Activated T-helper 2 cell treated with anti-CD3 and anti-CD28 coated beads, Interferon-gamma antibody, Interleukin-2, Interleukin-4, amounts not matched to agents 10 μg/mL and 5 μg/mL and 100 μg/mL, durations not matched to agents 14 hours and 24 hours and 36 hours (primary cell): ENCODE measurements at regions of chr10 and their contacts with region 1.

Region 1: GRCh38 chr10:103139803-103140202 is 53.3 kb downstream of the NT5C2 start:
- DNase-seq: no peak
- H3K4me3 Mint-ChIP-seq: no peak overlapping the region
- H3K27ac Mint-ChIP-seq: no peak overlapping the region
- H3K4me1 Mint-ChIP-seq: peaks cover 12% of the 10 kb centered on the region
- H3K27me3 Mint-ChIP-seq: no peaks in the 10 kb centered on the region

Region 2: DNA sequence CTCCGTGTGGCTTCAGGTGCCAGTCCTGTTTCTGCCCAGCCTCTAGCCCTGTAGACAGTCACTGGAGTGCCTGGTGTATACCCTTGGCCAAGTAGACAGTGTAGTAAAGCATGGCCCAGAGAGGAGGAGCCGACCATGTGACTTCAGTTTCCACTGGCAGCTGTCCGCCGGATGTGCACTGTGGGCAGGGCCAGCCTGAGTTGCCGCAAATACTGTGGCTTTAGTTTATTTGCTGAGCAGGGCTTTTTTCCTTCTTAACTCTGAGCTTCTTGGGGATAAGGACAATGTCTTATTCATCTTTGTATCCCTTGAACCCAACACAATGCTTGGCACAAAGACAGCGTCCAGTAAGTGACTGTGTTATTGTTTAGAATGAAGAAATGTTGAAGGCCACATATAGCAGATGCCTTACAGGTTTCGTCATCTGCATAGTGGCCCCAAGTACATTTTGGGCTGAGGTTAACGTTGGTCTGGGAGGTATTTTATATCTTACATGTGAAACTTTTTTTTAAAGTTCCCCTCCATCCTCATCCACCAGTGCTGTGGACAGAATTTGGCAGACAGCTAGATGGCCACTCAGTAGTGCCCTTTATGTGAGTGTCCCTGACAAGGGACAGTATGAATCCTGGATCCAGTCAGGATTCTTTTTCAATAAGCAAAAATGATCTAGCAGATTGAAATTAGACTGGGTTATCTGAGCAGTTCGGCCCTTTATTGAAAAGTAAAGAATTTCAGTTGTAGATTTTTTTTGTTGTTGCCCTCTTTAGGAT is 343.2 kb before region 1 on chr10:
- intact Hi-C with region 1: no loop called
- DNase-seq: peak; percentile 59
- H3K4me3 Mint-ChIP-seq: peak overlapping the region; percentile 8
- H3K27ac Mint-ChIP-seq: peak overlapping the region; percentile 54
- H3K4me1 Mint-ChIP-seq: peaks cover 26% of the 10 kb centered on the region
- H3K27me3 Mint-ChIP-seq: no peaks in the 10 kb centered on the region

Region 3: GRCh38 chr10:102853944-102854694 is 285.7 kb before region 1 on chr10 and contains the start of gene BORCS7:
- intact Hi-C with region 1: no loop called
- DNase-seq: peak; percentile 86
- H3K4me3 Mint-ChIP-seq: peak within 1 kb of the TSS; percentile 93
- H3K27ac Mint-ChIP-seq: peak within 1 kb of the TSS; percentile 96
- H3K4me1 Mint-ChIP-seq: peaks cover 16% of the 10 kb centered on the region
- H3K27me3 Mint-ChIP-seq: no peaks in the 10 kb centered on the region
- total RNA-seq, gene BORCS7: 10.4 and 10.7 TPM in 2 replicates

Region 4: DNA sequence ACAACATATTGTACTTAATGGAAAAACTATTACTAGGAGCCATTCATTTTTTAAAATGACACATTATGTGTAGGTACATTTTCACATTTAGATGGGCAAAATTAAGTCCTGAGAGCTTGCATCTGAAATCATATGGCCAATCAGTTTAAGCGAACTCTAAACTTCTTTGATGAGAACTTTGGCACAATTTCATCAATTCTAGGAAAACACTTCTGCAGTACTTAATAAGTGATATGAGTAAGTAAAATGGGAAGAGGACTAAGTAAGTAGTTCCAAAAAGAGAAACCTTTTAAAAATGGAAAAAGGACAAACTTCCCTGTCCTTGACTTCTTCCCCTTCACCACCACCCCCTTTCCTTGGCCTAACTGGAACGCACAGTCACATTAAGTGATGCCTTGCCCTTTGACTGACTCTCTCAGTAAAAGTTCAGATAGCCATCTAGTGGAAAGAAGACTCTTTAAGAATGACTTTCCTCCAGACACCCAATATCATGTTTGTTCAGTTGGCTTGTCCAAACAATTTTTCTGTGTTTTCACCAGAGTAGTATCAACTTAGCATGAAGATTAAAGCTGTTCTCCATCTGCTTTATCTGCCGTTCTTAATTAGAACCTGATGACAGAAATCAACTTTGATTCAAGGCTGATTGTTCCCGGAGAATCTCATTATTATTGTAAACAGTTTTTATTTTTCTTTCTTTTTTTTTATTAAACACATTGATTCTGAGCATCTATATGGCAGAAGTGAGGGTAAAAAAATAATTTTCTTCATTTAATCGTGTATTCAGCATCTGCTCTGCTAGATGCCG is 176.7 kb before region 1 on chr10:
- intact Hi-C with region 1: no loop called
- DNase-seq: no peak
- H3K4me3 Mint-ChIP-seq: no peak overlapping the region
- H3K27ac Mint-ChIP-seq: no peak overlapping the region
- H3K4me1 Mint-ChIP-seq: no peaks in the 10 kb centered on the region
- H3K27me3 Mint-ChIP-seq: no peaks in the 10 kb centered on the region

Region 5: DNA sequence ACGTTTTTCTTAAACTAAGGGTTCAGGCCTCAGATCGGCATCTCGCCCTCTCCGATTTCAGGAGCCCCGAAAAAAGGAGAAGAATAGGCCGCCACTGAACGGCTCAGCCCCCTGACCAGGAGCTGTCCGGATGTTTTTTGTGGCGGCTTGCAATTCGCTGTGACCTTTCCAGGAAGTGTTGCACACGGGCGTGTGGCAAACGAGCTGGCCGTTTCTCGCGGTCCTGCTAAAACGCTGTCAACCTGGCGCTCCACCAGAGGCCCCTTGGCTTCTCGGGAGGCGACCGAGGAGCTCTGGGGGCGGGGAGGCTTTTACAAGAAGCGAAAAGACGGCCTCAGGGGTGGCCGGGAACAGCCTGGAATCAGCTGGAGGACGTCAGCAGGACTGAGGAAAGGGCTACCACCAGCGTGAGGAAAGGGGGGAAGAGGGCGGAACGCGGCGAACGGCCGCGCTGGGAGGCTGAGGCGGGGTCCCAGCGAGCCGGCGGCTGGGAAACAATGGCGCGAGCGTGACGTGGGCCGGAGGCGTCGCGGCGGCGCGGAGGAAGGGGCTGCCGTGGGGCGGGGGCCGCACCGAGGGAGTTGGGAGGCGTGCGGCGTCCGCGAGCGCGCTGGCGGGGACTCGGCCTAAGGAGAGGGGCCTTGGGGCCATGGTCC is 52.8 kb after region 1 on chr10:
- intact Hi-C with region 1: loop called (anchors 5 kb)
- DNase-seq: peak; percentile 68
- H3K4me3 Mint-ChIP-seq: peak overlapping the region; percentile 99
- H3K27ac Mint-ChIP-seq: peak overlapping the region; percentile 99
- H3K4me1 Mint-ChIP-seq: peaks cover 30% of the 10 kb centered on the region
- H3K27me3 Mint-ChIP-seq: no peaks in the 10 kb centered on the region